Astrocyte of the cerebellum (primary cell): ENCODE measurements at regions of chr3 and their contacts with region 1.

Region 1: GRCh38 chr3:128770387-128770786 is 44.4 kb downstream of the RAB7A start:
- DNase-seq: no peak
- H3K4me3 ChIP-seq: no peak overlapping the region
- CTCF ChIP-seq: no peak

Region 2: DNA sequence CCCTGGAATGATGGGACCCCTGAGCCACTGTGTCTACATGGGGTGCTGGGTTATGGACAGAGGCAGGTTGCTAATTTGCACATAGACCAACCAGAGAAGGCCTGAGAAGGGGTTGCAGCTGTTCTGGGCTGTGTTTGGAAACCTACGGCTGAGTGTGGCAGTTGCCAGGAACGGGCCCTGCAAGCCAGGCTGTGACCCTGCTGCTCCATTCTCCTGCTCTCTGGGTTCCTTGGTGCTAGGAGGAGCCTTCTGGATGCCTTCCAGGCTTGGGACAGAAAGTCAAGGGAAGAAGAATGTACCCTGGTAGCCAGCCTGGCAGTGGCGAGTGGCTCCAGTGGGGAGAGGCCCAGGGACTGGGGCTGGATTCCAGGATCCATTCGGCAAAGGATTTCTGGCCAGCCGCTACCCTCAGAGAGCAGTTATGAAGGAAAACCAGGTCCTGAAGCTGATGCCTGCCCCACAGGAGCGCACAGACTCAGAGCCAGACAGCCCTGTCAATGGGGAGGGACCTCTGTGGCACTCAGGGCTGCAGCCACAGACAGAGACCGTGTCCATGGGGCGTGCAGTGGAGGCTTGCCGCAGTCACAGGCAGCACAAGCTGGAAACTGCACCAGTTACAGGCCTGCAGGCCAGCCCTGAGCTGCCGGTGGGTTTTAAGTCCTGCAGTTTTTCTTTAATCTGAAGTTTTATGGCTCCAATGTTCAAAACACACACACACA is 53.9 kb after region 1 on chr3:
- in situ Hi-C with region 1: loop called (anchors 5 kb)
- DNase-seq: no peak
- H3K4me3 ChIP-seq: no peak overlapping the region
- CTCF ChIP-seq: no peak